ENCODE measurements at regions of chr21 and their contacts with region 1.

Region 1: GRCh38 chr21:25967573-25968438 is 202.8 kb downstream of the APP start:
- DNase-seq: no peak
- H3K4me3 ChIP-seq: no peak overlapping the region
- H3K27ac ChIP-seq: no peak overlapping the region
- H3K4me1 ChIP-seq: peaks cover 14% of the 10 kb centered on the region
- H3K27me3 ChIP-seq: no peaks in the 10 kb centered on the region
- CTCF ChIP-seq: no peak

Region 2: GRCh38 chr21:25925936-25926335 is 41.9 kb before region 1 on chr21:
- CTCF ChIA-PET with region 1: no interaction called
- POLR2A ChIA-PET with region 1: interaction called, 18 read pairs
- intact Hi-C with region 1: no loop called
- DNase-seq: no peak
- H3K4me3 ChIP-seq: no peak overlapping the region
- H3K27ac ChIP-seq: no peak overlapping the region
- H3K4me1 ChIP-seq: no peaks in the 10 kb centered on the region
- H3K27me3 ChIP-seq: no peaks in the 10 kb centered on the region
- CTCF ChIP-seq: no peak

Region 3: GRCh38 chr21:25938658-25939395 is 29.0 kb before region 1 on chr21:
- CTCF ChIA-PET with region 1: no interaction called
- POLR2A ChIA-PET with region 1: no interaction called
- intact Hi-C with region 1: no loop called
- DNase-seq: no peak
- H3K4me3 ChIP-seq: no peak overlapping the region
- H3K27ac ChIP-seq: no peak overlapping the region
- H3K4me1 ChIP-seq: peaks cover 8% of the 10 kb centered on the region
- H3K27me3 ChIP-seq: no peaks in the 10 kb centered on the region
- CTCF ChIP-seq: no peak

Measured in PC-9 (cell line).